Natural killer cell (primary cell): ENCODE measurements at regions of chr2 and their contacts with region 1.

Region 1: DNA sequence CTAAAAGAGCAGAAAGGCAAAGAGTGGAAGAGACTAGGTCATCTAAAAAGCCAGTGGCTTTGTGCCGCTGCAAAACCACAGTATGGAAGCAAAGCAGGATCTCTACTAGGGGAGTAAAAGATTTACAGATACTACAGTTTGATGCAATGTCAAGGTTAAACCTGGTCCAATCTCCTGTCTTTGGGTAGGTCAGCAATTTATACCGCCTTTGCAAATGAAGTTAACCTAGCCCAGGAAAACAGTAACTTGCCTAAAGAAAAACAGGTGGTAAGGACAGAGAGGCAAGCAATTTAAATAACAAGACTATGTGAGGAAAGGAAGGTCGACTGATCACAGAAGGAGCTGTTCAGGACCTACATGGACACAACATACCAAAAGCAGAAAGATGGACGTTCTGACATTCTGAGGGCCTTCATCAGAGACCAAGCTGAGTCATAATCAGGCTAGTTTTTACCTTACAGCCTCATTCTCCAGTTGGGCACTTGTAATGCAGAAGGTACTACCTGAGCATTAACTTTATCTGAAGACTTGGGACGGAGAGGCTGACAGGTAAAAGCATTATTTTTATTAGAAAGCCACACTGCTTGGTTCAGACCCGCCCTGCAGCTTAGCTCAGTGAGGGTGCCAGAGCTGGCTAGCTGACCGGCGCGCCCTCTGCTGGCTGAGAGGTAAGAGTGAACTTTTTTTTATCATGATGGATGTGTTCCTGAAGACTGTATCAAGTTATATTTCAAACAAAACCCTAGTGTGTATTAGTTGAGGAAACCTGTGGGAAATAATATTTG is 15.9 kb downstream of the CDKL4 start:
- DNase-seq: peak; percentile 75 to 92
- ATAC-seq: peak; percentile 89 to 91 (median 89)
- H3K4me3 ChIP-seq: no peak overlapping the region
- H3K4me3 Mint-ChIP-seq: peak overlapping the region; percentile 61
- H3K27ac ChIP-seq: no peak overlapping the region
- H3K27ac Mint-ChIP-seq: peak overlapping the region in 1 of 2 donors; percentile 80
- H3K4me1 ChIP-seq: peaks cover 3% of the 10 kb centered on the region
- H3K4me1 Mint-ChIP-seq: peaks cover 19 to 25% of the 10 kb centered on the region in 2 donors
- H3K27me3 ChIP-seq: no peaks in the 10 kb centered on the region
- H3K27me3 Mint-ChIP-seq: peaks cover 0 to 5% of the 10 kb centered on the region in 2 donors
- CTCF ChIP-seq: peak; percentile 81

Region 2: GRCh38 chr2:38947240-38948239 is 280.3 kb before region 1 on chr2:
- intact Hi-C with region 1: loop called (anchors 1 kb)
- DNase-seq: peak; percentile 24 to 77
- ATAC-seq: peak; percentile 63 to 71 (median 63)
- H3K4me3 ChIP-seq: no peak overlapping the region
- H3K4me3 Mint-ChIP-seq: no peak overlapping the region
- H3K27ac ChIP-seq: no peak overlapping the region
- H3K27ac Mint-ChIP-seq: no peak overlapping the region
- H3K4me1 ChIP-seq: no peaks in the 10 kb centered on the region
- H3K4me1 Mint-ChIP-seq: no peaks in the 10 kb centered on the region
- H3K27me3 ChIP-seq: no peaks in the 10 kb centered on the region
- H3K27me3 Mint-ChIP-seq: peaks cover 3 to 16% of the 10 kb centered on the region in 2 donors
- CTCF ChIP-seq: peak; percentile 59

Region 3: GRCh38 chr2:39059366-39059952 is 168.4 kb before region 1 on chr2:
- intact Hi-C with region 1: loop called (anchors 1 kb)
- DNase-seq: peak in 1 of 2 donors; percentile 77
- ATAC-seq: peak in 1 of 3 donors; percentile 58
- H3K4me3 ChIP-seq: no peak overlapping the region
- H3K4me3 Mint-ChIP-seq: no peak overlapping the region
- H3K27ac ChIP-seq: no peak overlapping the region
- H3K27ac Mint-ChIP-seq: peak overlapping the region in 1 of 2 donors; percentile 38
- H3K4me1 ChIP-seq: no peaks in the 10 kb centered on the region
- H3K4me1 Mint-ChIP-seq: peaks cover 13 to 17% of the 10 kb centered on the region in 2 donors
- H3K27me3 ChIP-seq: no peaks in the 10 kb centered on the region
- H3K27me3 Mint-ChIP-seq: no peaks in the 10 kb centered on the region
- CTCF ChIP-seq: peak; percentile 95

Region 4: GRCh38 chr2:39099870-39100728 is 127.7 kb before region 1 on chr2:
- intact Hi-C with region 1: no loop called
- DNase-seq: no peak
- ATAC-seq: peak in 1 of 3 donors; percentile 65
- H3K4me3 ChIP-seq: no peak overlapping the region
- H3K4me3 Mint-ChIP-seq: no peak overlapping the region
- H3K27ac ChIP-seq: no peak overlapping the region
- H3K27ac Mint-ChIP-seq: peak overlapping the region; percentile 18 to 71
- H3K4me1 ChIP-seq: peaks cover 18% of the 10 kb centered on the region
- H3K4me1 Mint-ChIP-seq: peaks cover 48 to 52% of the 10 kb centered on the region in 2 donors
- H3K27me3 ChIP-seq: no peaks in the 10 kb centered on the region
- H3K27me3 Mint-ChIP-seq: no peaks in the 10 kb centered on the region
- CTCF ChIP-seq: no peak

Region 5: GRCh38 chr2:39124000-39124745 is 103.6 kb before region 1 on chr2:
- intact Hi-C with region 1: loop called (anchors 1 kb)
- DNase-seq: peak; percentile 90 to 98
- ATAC-seq: peak; percentile 75 to 93 (median 80)
- H3K4me3 ChIP-seq: peak overlapping the region; percentile 65
- H3K4me3 Mint-ChIP-seq: peak overlapping the region; percentile 90
- H3K27ac ChIP-seq: peak overlapping the region; percentile 77
- H3K27ac Mint-ChIP-seq: peak overlapping the region; percentile 89 to 96
- H3K4me1 ChIP-seq: peaks cover 38% of the 10 kb centered on the region
- H3K4me1 Mint-ChIP-seq: peaks cover 45 to 51% of the 10 kb centered on the region in 2 donors
- H3K27me3 ChIP-seq: no peaks in the 10 kb centered on the region
- H3K27me3 Mint-ChIP-seq: no peaks in the 10 kb centered on the region
- CTCF ChIP-seq: peak; percentile 62